Lower lobe of right lung (tissue), 2 donors: ENCODE measurements at regions of chr6 and their contacts with region 1.

Region 1: DNA sequence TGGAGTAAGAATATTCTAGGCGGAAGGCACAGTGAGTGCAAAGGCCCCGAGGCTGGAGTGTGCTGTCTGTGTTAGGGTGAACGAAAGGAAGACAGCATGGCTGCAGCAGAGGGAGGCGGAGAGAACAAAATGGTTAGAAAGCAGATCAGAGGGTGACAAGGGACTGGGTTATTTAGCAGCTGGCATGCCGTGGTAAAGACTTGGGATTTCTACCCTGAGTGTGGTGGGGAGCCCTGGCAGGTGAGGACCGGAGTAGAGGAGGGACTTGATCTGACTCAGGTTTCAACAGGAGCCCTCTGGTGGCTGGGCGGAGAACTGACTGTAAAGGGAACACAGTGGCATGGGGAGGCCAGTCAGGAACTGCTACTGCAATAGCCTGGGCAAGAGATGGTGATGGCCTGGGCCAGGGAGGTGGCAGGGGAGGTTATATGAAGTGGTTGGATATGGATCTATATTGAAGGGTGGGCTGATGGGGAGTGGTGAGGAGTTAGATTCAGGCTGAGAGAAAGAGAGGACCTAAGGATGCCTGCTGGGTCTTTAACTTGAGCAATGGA is 38.0 kb downstream of the PIM1 start:
- DNase-seq: peak; percentile 90
- ATAC-seq: peak; percentile 82 to 88
- H3K4me3 ChIP-seq: no peak overlapping the region
- H3K27ac ChIP-seq: no peak overlapping the region
- H3K4me1 ChIP-seq: peaks cover 10% of the 10 kb centered on the region
- H3K27me3 ChIP-seq: no peaks in the 10 kb centered on the region
- CTCF ChIP-seq: peak; percentile 77

Region 2: GRCh38 chr6:36885461-36886401 is 322.2 kb before region 1 on chr6 and contains the start of gene C6orf89:
- intact Hi-C with region 1: loop called (anchors 10 kb)
- DNase-seq: peak; percentile 99
- ATAC-seq: peak; percentile 100
- H3K4me3 ChIP-seq: peak within 1 kb of the TSS; percentile 79
- H3K27ac ChIP-seq: peak within 1 kb of the TSS; percentile 86
- H3K4me1 ChIP-seq: peaks cover 24% of the 10 kb centered on the region
- H3K27me3 ChIP-seq: no peaks in the 10 kb centered on the region
- CTCF ChIP-seq: peak; percentile 83
- total RNA-seq, gene C6orf89: 54.7 TPM

Region 3: GRCh38 chr6:37029249-37029971 is 178.6 kb before region 1 on chr6:
- intact Hi-C with region 1: loop called (anchors 10 kb)
- DNase-seq: peak; percentile 86
- ATAC-seq: peak; percentile 86 to 94
- H3K4me3 ChIP-seq: no peak overlapping the region
- H3K27ac ChIP-seq: no peak overlapping the region
- H3K4me1 ChIP-seq: peaks cover 13% of the 10 kb centered on the region
- H3K27me3 ChIP-seq: no peaks in the 10 kb centered on the region
- CTCF ChIP-seq: peak; percentile 70

Region 4: DNA sequence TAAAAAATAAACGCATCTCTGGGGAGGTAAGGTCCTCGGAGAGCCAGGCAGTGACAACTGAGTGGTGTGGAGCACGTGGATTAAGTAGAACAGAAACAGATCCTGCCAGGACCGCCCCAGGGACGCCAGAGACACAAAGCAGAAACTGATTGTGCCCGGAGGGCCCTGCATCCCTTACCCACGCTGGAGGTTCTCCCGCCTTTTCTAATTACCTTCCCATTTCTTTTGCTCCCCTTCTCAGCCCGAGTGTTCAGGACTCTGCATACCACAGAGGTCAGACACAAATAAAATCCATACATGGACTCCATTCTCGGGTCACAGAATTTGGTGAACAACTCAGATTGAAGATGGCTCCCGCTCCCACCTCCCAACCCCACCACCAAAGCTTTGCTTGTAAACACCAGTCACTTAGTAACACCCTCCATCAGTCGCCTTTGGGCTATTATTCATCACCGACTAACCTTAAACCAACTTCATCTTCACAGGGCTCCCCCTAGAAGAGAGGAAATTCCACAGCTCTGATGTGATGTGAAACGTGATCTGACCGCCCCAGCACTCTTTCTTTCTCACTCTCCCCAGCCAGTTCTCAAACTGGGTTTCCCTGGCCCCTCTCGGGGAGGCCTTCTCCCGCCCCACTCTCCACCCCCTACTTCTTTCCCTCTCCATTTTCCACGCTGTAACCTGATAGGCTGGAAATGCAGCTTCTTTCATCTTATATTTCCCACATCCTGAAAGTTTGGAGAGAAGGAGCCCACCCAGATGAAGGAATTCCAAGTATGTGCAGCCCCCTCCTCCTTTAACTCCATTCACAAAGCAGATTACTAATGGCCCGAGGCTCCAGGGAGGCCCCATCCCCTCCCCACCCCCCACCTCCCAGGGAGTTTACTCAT is 70.5 kb before region 1 on chr6:
- intact Hi-C with region 1: no loop called
- DNase-seq: no peak
- ATAC-seq: peak; percentile 61 to 63
- H3K4me3 ChIP-seq: no peak overlapping the region
- H3K27ac ChIP-seq: no peak overlapping the region
- H3K4me1 ChIP-seq: peaks cover 39% of the 10 kb centered on the region
- H3K27me3 ChIP-seq: no peaks in the 10 kb centered on the region
- CTCF ChIP-seq: no peak